ENCODE measurements at regions of chr16 and their contacts with region 1.

Region 1: GRCh38 chr16:26963114-26963513 is 103.6 kb upstream of the C16orf82 start:
- DNase-seq: peak; percentile 55 to 60 (median 58)
- ATAC-seq: peak; percentile 88
- H3K4me3 ChIP-seq: no peak overlapping the region
- H3K27ac ChIP-seq: no peak overlapping the region
- H3K4me1 ChIP-seq: no peaks in the 10 kb centered on the region
- H3K27me3 ChIP-seq: no peaks in the 10 kb centered on the region
- CTCF ChIP-seq: peak; percentile 48 to 72 (median 62); a peak in 5 of 6 replicates
- EP300 ChIP-seq: no peak
- POLR2A ChIP-seq: no peak
- RAD21 ChIP-seq: peak in 1 of 2 experiments; percentile 37; a peak in 2 of 4 replicates

Region 2: GRCh38 chr16:27109666-27110523 is 146.8 kb after region 1 on chr16:
- CTCF ChIA-PET with region 1: interaction called, 6 read pairs
- POLR2A ChIA-PET with region 1: no interaction called
- in situ Hi-C with region 1: no loop called
- intact Hi-C with region 1: loop called (anchors 5 kb)
- DNase-seq: peak; percentile 83 to 94 (median 89)
- ATAC-seq: peak; percentile 88
- H3K4me3 ChIP-seq: peak overlapping the region; percentile 28; the same call in 1 of the 2 replicates
- H3K27ac ChIP-seq: no peak overlapping the region
- H3K4me1 ChIP-seq: peaks cover 0 to 31% of the 10 kb centered on the region in 2 experiments; a peak in 4 of 5 replicates
- H3K27me3 ChIP-seq: no peaks in the 10 kb centered on the region; a peak in 2 of 5 replicates
- CTCF ChIP-seq: peak; percentile 69 to 89 (median 81)
- EP300 ChIP-seq: no peak
- POLR2A ChIP-seq: no peak
- RAD21 ChIP-seq: peak; percentile 69 to 84

Region 3: GRCh38 chr16:27414758-27415431 is 451.8 kb after region 1 on chr16:
- CTCF ChIA-PET with region 1: no interaction called
- POLR2A ChIA-PET with region 1: no interaction called
- in situ Hi-C with region 1: no loop called
- intact Hi-C with region 1: no loop called
- DNase-seq: no peak
- ATAC-seq: no peak
- H3K4me3 ChIP-seq: no peak overlapping the region
- H3K27ac ChIP-seq: no peak overlapping the region
- H3K4me1 ChIP-seq: no peaks in the 10 kb centered on the region
- H3K27me3 ChIP-seq: no peaks in the 10 kb centered on the region
- CTCF ChIP-seq: no peak
- EP300 ChIP-seq: no peak
- POLR2A ChIP-seq: no peak
- RAD21 ChIP-seq: no peak